HEK293 (cell line): ENCODE measurements at regions of chr2 and their contacts with region 1.

Region 1: GRCh38 chr2:127197475-127198385 is 22.4 kb downstream of the CYP27C1 start:
- H3K4me3 ChIP-seq: no peak overlapping the region
- H3K27ac ChIP-seq: no peak overlapping the region
- H3K4me1 ChIP-seq: no peaks in the 10 kb centered on the region
- CTCF ChIP-seq: peak; percentile 92

Region 2: GRCh38 chr2:127157651-127158470 is 39.9 kb before region 1 on chr2:
- CTCF ChIA-PET with region 1: no interaction called
- POLR2A ChIA-PET with region 1: no interaction called
- H3K4me3 ChIP-seq: no peak overlapping the region
- H3K27ac ChIP-seq: no peak overlapping the region
- H3K4me1 ChIP-seq: no peaks in the 10 kb centered on the region
- CTCF ChIP-seq: no peak

Region 3: GRCh38 chr2:127208313-127208712 is 10.6 kb after region 1 on chr2:
- CTCF ChIA-PET with region 1: interaction called, 12 read pairs
- POLR2A ChIA-PET with region 1: no interaction called
- H3K4me3 ChIP-seq: no peak overlapping the region
- H3K27ac ChIP-seq: no peak overlapping the region
- H3K4me1 ChIP-seq: peaks cover 8% of the 10 kb centered on the region
- CTCF ChIP-seq: no peak

Region 4: DNA sequence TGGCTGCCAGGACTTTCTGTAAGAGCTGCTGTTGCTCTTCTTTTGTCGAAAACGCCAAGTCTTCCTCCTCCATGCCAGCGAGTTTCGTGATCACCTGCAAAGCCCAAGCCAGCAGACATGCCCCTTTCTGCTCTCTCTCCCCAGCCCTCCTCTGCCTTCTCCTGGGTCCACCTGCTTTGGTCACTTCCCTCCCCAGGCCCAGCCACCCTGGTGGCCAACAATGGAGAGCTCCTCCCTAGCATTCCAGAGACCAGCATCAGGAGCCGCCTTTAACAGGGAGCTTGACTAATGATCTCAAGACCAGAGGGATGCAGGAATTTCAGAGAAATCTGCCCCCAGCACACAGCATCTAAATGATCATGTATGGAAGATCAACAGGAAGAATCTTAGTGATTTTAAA is 61.6 kb after region 1 on chr2:
- CTCF ChIA-PET with region 1: interaction called, 12 read pairs
- POLR2A ChIA-PET with region 1: no interaction called
- H3K4me3 ChIP-seq: no peak overlapping the region
- H3K27ac ChIP-seq: no peak overlapping the region
- H3K4me1 ChIP-seq: no peaks in the 10 kb centered on the region
- CTCF ChIP-seq: no peak

Region 5: GRCh38 chr2:128054104-128054503 is 856.4 kb after region 1 on chr2:
- CTCF ChIA-PET with region 1: no interaction called
- POLR2A ChIA-PET with region 1: no interaction called
- H3K4me3 ChIP-seq: no peak overlapping the region
- H3K27ac ChIP-seq: no peak overlapping the region
- H3K4me1 ChIP-seq: no peaks in the 10 kb centered on the region
- CTCF ChIP-seq: no peak